Heart right ventricle (tissue), 16 donors: ENCODE measurements at regions of chr3 and their contacts with region 1.

Region 1: GRCh38 chr3:135426508-135426907 is 539.0 kb upstream of the PPP2R3A start:
- DNase-seq: no peak
- ATAC-seq: no peak
- H3K4me3 ChIP-seq: no peak overlapping the region
- H3K27ac ChIP-seq: no peak overlapping the region
- H3K4me1 ChIP-seq: no peaks in the 10 kb centered on the region
- H3K27me3 ChIP-seq: peaks cover 0 to 5% (median 0%) of the 10 kb centered on the region in 7 donors
- CTCF ChIP-seq: no peak

Region 2: DNA sequence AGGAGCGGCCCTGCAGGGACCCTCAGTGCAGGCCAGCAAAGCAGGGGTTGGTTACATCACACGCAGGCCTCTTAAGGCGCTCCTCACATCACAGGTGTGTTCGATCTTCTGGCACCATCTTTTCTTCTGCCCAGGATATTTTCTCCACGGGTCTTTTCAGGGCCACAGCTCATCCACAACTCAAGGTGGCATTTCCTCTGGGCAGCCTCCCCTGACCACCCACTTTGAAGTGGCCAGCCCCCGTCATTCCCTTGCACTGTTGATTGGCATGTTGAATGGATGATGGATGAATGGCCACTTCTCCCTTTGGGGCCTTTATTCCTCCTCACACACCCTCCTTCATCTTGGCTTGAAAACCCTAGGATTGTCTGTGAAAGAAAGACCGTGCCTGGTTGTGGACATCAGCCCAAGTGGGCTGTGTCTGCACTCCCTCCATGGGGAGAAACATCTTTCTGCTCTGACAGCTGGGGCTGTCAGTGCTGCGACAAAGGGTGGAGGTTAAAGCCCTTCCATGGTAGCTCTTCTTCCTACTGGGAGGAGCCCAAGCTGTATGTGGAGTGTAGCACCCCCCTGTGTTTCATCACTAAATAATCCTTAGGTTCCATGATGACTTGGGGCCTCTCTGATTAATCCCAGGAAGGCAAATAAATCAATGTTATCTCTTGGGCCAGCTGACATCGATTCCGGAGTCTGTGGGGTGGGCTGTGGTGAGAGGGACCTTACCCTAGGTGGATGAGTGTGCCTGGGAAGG is 528.9 kb before region 1 on chr3:
- intact Hi-C with region 1: no loop called
- DNase-seq: no peak
- ATAC-seq: no peak
- H3K4me3 ChIP-seq: no peak overlapping the region
- H3K27ac ChIP-seq: no peak overlapping the region
- H3K4me1 ChIP-seq: no peaks in the 10 kb centered on the region
- H3K27me3 ChIP-seq: no peaks in the 10 kb centered on the region
- CTCF ChIP-seq: no peak

Region 3: GRCh38 chr3:135412480-135412879 is 14.0 kb before region 1 on chr3:
- intact Hi-C with region 1: loop called in 1 of 10 experiments (anchors 2 kb)
- DNase-seq: no peak
- ATAC-seq: no peak
- H3K4me3 ChIP-seq: no peak overlapping the region
- H3K27ac ChIP-seq: no peak overlapping the region
- H3K4me1 ChIP-seq: no peaks in the 10 kb centered on the region
- H3K27me3 ChIP-seq: no peaks in the 10 kb centered on the region
- CTCF ChIP-seq: no peak